Body of pancreas (tissue), 4 donors: ENCODE measurements at regions of chr4 and their contacts with region 1.

Region 1: GRCh38 chr4:109424093-109424841 is 9.3 kb upstream of the SEC24B start:
- DNase-seq: no peak
- ATAC-seq: no peak
- H3K4me3 ChIP-seq: no peak overlapping the region
- H3K27ac ChIP-seq: no peak overlapping the region
- H3K4me1 ChIP-seq: peaks cover 3% of the 10 kb centered on the region
- H3K27me3 ChIP-seq: no peaks in the 10 kb centered on the region
- CTCF ChIP-seq: no peak
- POLR2A ChIP-seq: no peak

Region 2: GRCh38 chr4:109815151-109816081 is 391.1 kb after region 1 on chr4 and contains the start of gene GAR1:
- intact Hi-C with region 1: no loop called
- DNase-seq: peak; percentile 91 to 96 (median 94)
- ATAC-seq: peak; percentile 99
- H3K4me3 ChIP-seq: peak within 1 kb of the TSS; percentile 60 to 62
- H3K27ac ChIP-seq: peak within 1 kb of the TSS; percentile 54 to 97 (median 82)
- H3K4me1 ChIP-seq: peaks cover 24% of the 10 kb centered on the region
- H3K27me3 ChIP-seq: no peaks in the 10 kb centered on the region
- CTCF ChIP-seq: peak in 3 of 7 experiments; percentile 6 to 15 (median 13)
- POLR2A ChIP-seq: peak; percentile 61 to 90 (median 90)
- total RNA-seq, gene GAR1: 2.6 to 4.9 TPM

Region 3: GRCh38 chr4:109836986-109837385 is 412.7 kb after region 1 on chr4:
- intact Hi-C with region 1: loop called (anchors 10 kb)
- DNase-seq: no peak
- ATAC-seq: no peak
- H3K4me3 ChIP-seq: no peak overlapping the region
- H3K27ac ChIP-seq: no peak overlapping the region
- H3K4me1 ChIP-seq: no peaks in the 10 kb centered on the region
- H3K27me3 ChIP-seq: no peaks in the 10 kb centered on the region
- CTCF ChIP-seq: no peak
- POLR2A ChIP-seq: no peak

Region 4: GRCh38 chr4:109979920-109980717 is 555.9 kb after region 1 on chr4:
- intact Hi-C with region 1: loop called (anchors 10 kb)
- DNase-seq: no peak
- ATAC-seq: no peak
- H3K4me3 ChIP-seq: no peak overlapping the region
- H3K27ac ChIP-seq: no peak overlapping the region
- H3K4me1 ChIP-seq: peaks cover 10% of the 10 kb centered on the region
- H3K27me3 ChIP-seq: no peaks in the 10 kb centered on the region
- CTCF ChIP-seq: no peak
- POLR2A ChIP-seq: no peak